ENCODE measurements at regions of chr6 and their contacts with region 1.

Region 1: GRCh38 chr6:2634139-2634964 is 116.4 kb downstream of the MYLK4 start:
- DNase-seq: peak; percentile 90

Region 2: DNA sequence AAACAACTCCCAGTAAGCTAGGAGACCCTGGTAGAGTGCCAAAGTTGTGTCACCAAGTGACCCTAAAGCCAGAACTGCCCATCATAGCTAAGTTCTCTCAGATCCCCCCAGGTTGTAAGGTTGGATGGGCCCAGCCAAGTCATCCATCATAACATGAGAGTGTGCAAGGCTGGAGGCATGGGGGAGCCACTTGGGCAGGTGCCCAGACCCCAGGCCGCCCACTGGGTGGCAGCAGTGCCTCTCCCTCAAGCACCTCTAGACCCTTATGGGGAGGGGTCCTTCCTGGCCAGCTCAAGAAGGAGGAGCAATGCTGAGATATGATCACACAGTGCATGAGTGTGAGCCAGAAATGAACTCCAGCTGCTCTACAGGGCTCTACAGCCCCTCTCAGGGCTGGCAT is 38.1 kb before region 1 on chr6:
- CTCF ChIA-PET with region 1: interaction called, 19 read pairs
- POLR2A ChIA-PET with region 1: interaction called, 3 read pairs
- DNase-seq: peak; percentile 36

Region 3: DNA sequence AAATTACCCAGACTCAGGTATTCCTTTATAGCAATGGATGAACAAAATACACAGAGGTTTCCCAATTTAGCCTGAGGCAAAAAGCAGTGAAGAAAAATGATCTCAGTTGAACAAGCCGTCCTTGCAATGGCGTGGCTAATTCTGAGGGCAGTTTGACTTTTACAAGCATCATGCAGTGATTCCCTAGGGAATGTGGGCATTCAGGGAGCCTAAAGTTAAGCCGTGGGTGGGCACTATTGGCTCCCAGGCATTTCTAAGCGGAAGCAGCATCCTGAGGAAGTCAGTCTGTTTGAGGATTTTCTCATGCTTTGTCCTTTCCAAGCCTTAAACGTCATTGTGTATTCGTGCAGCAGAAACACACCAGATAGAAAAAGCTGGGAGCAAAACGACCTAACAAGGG is 17.5 kb before region 1 on chr6:
- CTCF ChIA-PET with region 1: no interaction called
- POLR2A ChIA-PET with region 1: no interaction called
- DNase-seq: no peak

Region 4: GRCh38 chr6:2646346-2646745 is 12.0 kb after region 1 on chr6:
- CTCF ChIA-PET with region 1: interaction called, 11 read pairs
- POLR2A ChIA-PET with region 1: no interaction called
- DNase-seq: no peak

Measured in HEK293T (cell line).